CD4-positive, alpha-beta T cell (primary cell): ENCODE measurements at regions of chr9 and their contacts with region 1.

Region 1: GRCh38 chr9:14565352-14566016 is 127.7 kb downstream of the ZDHHC21 start:
- DNase-seq: no peak
- ATAC-seq: no peak
- H3K4me3 ChIP-seq: no peak overlapping the region
- H3K4me3 Mint-ChIP-seq: no peak overlapping the region
- H3K27ac ChIP-seq: no peak overlapping the region
- H3K27ac Mint-ChIP-seq: no peak overlapping the region
- H3K4me1 ChIP-seq: no peaks in the 10 kb centered on the region
- H3K4me1 Mint-ChIP-seq: no peaks in the 10 kb centered on the region
- H3K27me3 ChIP-seq: peaks cover 0 to 2% of the 10 kb centered on the region in 2 experiments
- H3K27me3 Mint-ChIP-seq: no peaks in the 10 kb centered on the region
- CTCF ChIP-seq: no peak

Region 2: GRCh38 chr9:14515571-14516198 is 49.8 kb before region 1 on chr9:
- CTCF ChIA-PET with region 1: no interaction called
- POLR2A ChIA-PET with region 1: no interaction called
- intact Hi-C with region 1: loop called in 1 of 2 experiments (anchors 5 kb)
- DNase-seq: no peak
- ATAC-seq: no peak
- H3K4me3 ChIP-seq: no peak overlapping the region
- H3K4me3 Mint-ChIP-seq: no peak overlapping the region
- H3K27ac ChIP-seq: no peak overlapping the region
- H3K27ac Mint-ChIP-seq: no peak overlapping the region
- H3K4me1 ChIP-seq: no peaks in the 10 kb centered on the region
- H3K4me1 Mint-ChIP-seq: no peaks in the 10 kb centered on the region
- H3K27me3 ChIP-seq: no peaks in the 10 kb centered on the region
- H3K27me3 Mint-ChIP-seq: no peaks in the 10 kb centered on the region
- CTCF ChIP-seq: no peak